ENCODE measurements at regions of chr7 and their contacts with region 1.

Region 1: GRCh38 chr7:116236020-116236630 is 25.8 kb downstream of the TES start:
- DNase-seq: peak; percentile 46
- H3K4me3 Mint-ChIP-seq: no peak overlapping the region
- H3K27ac Mint-ChIP-seq: no peak overlapping the region
- H3K4me1 Mint-ChIP-seq: peaks cover 61% of the 10 kb centered on the region
- H3K27me3 Mint-ChIP-seq: no peaks in the 10 kb centered on the region

Region 2: DNA sequence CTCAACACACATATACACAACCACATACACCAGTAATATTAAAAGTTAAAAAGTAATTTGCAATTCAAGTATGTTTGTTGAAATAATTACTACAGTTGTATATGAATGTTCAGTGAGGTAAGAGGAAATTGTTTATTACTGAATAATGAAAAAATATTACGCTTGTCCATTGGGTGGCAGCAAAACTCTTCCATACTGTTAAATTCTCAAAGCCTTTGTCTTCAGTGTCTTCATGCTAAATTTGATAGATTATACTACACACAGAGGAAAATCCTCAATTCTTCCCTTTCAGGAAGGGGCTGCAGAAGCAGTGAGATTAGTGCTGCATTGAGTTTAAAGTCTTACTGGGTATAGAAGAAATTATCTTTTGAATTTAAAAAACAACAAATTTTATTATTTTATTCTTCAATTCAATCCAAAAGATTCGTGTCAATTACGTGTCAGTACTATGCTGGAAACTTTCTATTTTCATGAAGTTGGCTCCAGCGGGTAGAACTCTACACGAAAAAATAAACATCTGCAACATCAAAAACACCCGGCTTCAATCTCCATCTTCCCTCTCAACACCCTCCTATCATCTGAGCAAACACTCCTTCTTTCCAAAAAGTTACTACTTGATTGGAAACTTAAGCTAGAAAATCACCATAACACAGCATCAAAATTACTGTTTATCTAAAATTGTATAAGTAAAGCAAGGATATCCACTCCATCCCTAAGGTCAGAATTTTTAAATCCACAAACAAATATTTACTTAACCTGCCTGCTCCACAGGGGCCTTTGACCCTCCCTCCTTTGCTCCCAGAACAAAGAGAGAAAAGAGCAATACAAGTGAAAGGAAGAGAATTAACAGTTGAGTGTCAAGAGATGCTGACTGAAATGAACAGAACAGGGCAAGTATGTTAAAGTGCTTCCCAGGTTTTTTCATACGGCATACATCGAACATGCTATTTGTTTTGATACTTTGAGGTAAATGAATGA is 62.8 kb before region 1 on chr7:
- CTCF ChIA-PET with region 1: interaction called, 399 read pairs
- POLR2A ChIA-PET with region 1: no interaction called
- intact Hi-C with region 1: loop called (anchors 1 kb)
- DNase-seq: no peak
- H3K4me3 Mint-ChIP-seq: no peak overlapping the region
- H3K27ac Mint-ChIP-seq: no peak overlapping the region
- H3K4me1 Mint-ChIP-seq: no peaks in the 10 kb centered on the region
- H3K27me3 Mint-ChIP-seq: peaks cover 4% of the 10 kb centered on the region

Region 3: DNA sequence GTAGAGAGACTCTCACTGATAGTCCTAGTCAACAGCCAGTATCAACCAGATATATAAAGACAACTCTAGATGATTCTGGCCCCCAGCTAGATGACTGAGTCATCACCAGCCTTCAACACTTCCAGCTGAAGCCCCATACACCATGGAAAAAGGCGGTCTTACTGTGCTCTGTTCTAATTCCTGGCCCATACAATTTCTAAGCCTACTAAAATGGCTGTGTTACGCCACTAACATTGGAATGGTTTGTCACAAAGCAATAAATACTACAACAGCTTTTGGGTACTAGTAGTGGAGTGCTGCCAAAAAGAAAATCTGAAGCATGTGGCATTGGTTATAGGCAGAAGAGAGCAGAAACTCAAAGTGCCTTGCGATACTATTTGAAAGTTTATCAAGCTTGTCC is 38.8 kb before region 1 on chr7:
- CTCF ChIA-PET with region 1: interaction called, 17 read pairs
- POLR2A ChIA-PET with region 1: no interaction called
- intact Hi-C with region 1: no loop called
- DNase-seq: no peak
- H3K4me3 Mint-ChIP-seq: no peak overlapping the region
- H3K27ac Mint-ChIP-seq: no peak overlapping the region
- H3K4me1 Mint-ChIP-seq: no peaks in the 10 kb centered on the region
- H3K27me3 Mint-ChIP-seq: peaks cover 3% of the 10 kb centered on the region

Region 4: DNA sequence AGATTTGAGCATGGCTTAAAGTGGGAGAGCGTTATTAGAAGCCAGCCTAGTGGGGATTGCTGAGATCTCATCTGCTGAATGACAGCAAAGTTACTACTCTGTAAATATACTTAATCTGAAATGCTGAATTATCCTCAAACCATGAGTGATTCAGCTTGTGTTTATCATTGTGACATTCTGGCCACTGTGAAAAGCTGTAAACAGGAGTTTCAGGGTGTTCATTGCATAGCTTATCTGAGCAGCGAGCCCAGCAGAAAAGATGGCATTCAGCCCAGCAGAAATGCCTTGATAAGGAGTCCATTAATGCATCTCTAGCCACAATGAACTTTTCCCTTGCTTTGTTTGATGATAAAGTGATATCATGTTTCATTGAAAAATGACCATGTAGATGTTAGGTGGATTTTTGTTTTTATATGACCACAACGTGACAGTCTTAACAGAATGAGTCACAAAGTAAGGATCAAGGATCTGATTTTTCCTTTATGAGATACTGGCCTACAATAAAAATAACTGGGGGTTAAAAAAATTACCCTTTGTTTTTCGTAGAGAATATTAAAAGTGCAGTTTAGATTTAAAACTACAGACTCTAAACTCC is 18.0 kb before region 1 on chr7:
- CTCF ChIA-PET with region 1: interaction called, 75 read pairs
- POLR2A ChIA-PET with region 1: no interaction called
- intact Hi-C with region 1: no loop called
- DNase-seq: no peak
- H3K4me3 Mint-ChIP-seq: no peak overlapping the region
- H3K27ac Mint-ChIP-seq: peak overlapping the region; percentile 61
- H3K4me1 Mint-ChIP-seq: peaks cover 84% of the 10 kb centered on the region
- H3K27me3 Mint-ChIP-seq: no peaks in the 10 kb centered on the region

Region 5: DNA sequence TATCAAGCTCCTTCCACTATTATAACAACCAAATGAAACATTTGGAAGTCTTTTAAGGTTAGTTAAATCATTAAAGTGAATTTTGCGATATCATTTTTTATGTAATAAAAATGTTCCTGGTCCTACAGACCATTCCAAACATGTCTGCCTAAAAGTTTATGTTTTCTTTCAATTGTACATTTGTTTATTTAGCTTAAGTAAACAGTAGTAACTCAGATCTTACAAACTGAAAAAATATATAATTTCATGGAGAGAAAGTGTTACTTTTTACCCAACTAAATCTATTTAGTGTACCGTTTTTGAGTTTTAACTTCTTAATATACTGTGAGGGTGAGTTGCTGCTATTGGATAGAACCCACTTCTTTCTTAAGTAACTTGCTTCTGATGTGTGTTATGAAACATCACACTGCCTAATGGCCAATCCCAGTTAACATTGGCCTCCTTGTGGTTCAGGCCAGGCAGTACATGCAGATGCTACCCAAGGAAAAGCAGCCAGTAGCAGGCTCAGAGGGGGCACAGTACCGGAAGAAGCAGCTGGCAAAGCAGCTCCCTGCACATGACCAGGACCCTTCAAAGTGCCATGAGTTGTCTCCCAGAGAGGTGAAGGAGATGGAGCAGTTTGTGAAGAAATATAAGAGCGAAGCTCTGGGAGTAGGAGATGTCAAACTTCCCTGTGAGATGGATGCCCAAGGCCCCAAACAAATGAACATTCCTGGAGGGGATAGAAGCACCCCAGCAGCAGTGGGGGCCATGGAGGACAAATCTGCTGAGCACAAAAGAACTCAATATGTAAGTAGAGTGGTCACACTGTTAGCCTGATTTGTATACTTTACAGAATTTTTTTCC is 13.8 kb after region 1 on chr7:
- CTCF ChIA-PET with region 1: interaction called, 11 read pairs
- POLR2A ChIA-PET with region 1: no interaction called
- intact Hi-C with region 1: no loop called
- DNase-seq: no peak
- H3K4me3 Mint-ChIP-seq: no peak overlapping the region
- H3K27ac Mint-ChIP-seq: peak overlapping the region; percentile 31
- H3K4me1 Mint-ChIP-seq: peaks cover 27% of the 10 kb centered on the region
- H3K27me3 Mint-ChIP-seq: no peaks in the 10 kb centered on the region